ENCODE measurements at regions of chr20 and their contacts with region 1.

Region 1: GRCh38 chr20:49219089-49219923 is at the start of gene DDX27:
- DNase-seq: peak; percentile 94 to 98 (median 97)
- H3K4me3 ChIP-seq: peak within 1 kb of the TSS; percentile 100
- H3K4me3 Mint-ChIP-seq: peak within 1 kb of the TSS; percentile 87 to 99 (median 95)
- H3K27ac ChIP-seq: peak within 1 kb of the TSS; percentile 98
- H3K27ac Mint-ChIP-seq: peak within 1 kb of the TSS; percentile 80 to 100 (median 98)
- H3K4me1 ChIP-seq: peaks cover 23% of the 10 kb centered on the region
- H3K4me1 Mint-ChIP-seq: peaks cover 27 to 40% (median 32%) of the 10 kb centered on the region in 3 donors
- H3K27me3 ChIP-seq: no peaks in the 10 kb centered on the region
- H3K27me3 Mint-ChIP-seq: peaks cover 0 to 3% of the 10 kb centered on the region in 2 donors
- total RNA-seq, gene DDX27: 67.3 to 68.7 TPM

Region 2: GRCh38 chr20:49132995-49133478 is 86.3 kb before region 1 on chr20:
- CTCF ChIA-PET with region 1: interaction called, 98 read pairs
- POLR2A ChIA-PET with region 1: interaction called, 6 read pairs
- DNase-seq: peak in 2 of 5 donors; percentile 40 to 54
- H3K4me3 ChIP-seq: no peak overlapping the region
- H3K4me3 Mint-ChIP-seq: no peak overlapping the region
- H3K27ac ChIP-seq: no peak overlapping the region
- H3K27ac Mint-ChIP-seq: peak overlapping the region in 7 of 8 donors; percentile 4 to 52 (median 31)
- H3K4me1 ChIP-seq: no peaks in the 10 kb centered on the region
- H3K4me1 Mint-ChIP-seq: peaks cover 10 to 26% (median 13%) of the 10 kb centered on the region in 3 donors
- H3K27me3 ChIP-seq: no peaks in the 10 kb centered on the region
- H3K27me3 Mint-ChIP-seq: no peaks in the 10 kb centered on the region

Region 3: DNA sequence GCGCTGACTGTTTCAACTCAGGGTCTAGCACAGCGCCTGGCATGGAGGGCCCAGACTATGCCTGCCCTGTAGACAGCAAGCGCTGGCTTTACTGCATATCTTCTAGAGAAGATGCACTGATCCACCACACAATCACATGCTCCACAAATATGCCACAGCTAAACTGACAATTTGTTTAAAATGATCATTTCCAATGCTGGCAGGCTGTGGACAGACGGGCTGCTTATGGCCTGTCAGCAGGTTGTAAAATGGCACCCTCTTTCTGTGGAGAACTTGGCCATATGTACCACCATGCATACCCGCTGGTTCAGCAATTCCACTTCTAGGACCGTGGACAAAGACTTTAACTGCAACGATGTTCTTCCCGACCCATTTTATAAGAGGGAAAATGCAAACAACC is 72.0 kb before region 1 on chr20:
- CTCF ChIA-PET with region 1: interaction called, 10 read pairs
- POLR2A ChIA-PET with region 1: no interaction called
- DNase-seq: no peak
- H3K4me3 ChIP-seq: no peak overlapping the region
- H3K4me3 Mint-ChIP-seq: no peak overlapping the region
- H3K27ac ChIP-seq: no peak overlapping the region
- H3K27ac Mint-ChIP-seq: peak overlapping the region in 1 of 8 donors; percentile 2
- H3K4me1 ChIP-seq: no peaks in the 10 kb centered on the region
- H3K4me1 Mint-ChIP-seq: peaks cover 12 to 33% (median 31%) of the 10 kb centered on the region in 3 donors
- H3K27me3 ChIP-seq: no peaks in the 10 kb centered on the region
- H3K27me3 Mint-ChIP-seq: peaks cover 0 to 2% of the 10 kb centered on the region in 2 donors

Region 4: DNA sequence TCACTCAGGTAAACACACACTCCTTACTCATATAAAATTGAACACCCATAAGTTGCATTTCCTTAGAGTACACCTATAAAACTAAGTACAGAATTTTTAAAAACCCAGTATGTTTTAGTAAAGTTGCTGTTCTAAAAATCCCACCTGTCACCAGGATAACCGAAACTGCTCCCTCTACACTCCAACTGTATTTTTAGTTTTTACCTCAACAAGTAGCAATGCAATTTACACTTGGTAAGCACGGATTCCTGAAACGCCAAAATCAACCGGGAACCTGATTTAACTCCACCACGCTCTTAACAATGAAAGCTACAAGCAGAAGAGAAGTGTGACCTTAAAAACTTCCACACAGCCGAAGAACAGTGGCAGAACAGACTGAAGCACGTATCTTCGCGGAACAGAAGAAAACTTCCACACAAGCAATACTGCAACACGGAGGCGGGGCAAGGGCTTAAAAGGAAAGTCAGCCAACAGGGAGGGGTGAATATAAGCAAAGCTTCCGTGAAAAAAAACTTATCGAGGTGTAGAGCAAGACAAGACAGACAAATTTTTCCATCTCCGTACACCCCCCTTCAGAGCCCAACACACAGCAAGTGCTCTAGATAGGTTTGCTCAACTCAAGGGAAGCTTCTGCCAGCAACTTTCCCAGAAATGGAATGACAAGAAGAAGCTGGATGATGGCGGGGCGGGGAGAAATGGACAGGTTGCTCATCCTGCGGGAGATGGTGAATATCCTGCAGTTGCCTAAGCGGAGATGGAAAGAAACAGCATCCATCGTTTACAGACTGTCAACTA is 32.6 kb before region 1 on chr20:
- CTCF ChIA-PET with region 1: interaction called, 46 read pairs
- POLR2A ChIA-PET with region 1: interaction called, 7 read pairs
- DNase-seq: peak; percentile 40 to 71 (median 55)
- H3K4me3 ChIP-seq: peak overlapping the region; percentile 87
- H3K4me3 Mint-ChIP-seq: peak overlapping the region; percentile 87 to 98 (median 97)
- H3K27ac ChIP-seq: peak overlapping the region; percentile 69
- H3K27ac Mint-ChIP-seq: peak overlapping the region; percentile 47 to 97 (median 92)
- H3K4me1 ChIP-seq: peaks cover 38% of the 10 kb centered on the region
- H3K4me1 Mint-ChIP-seq: peaks cover 50 to 57% (median 54%) of the 10 kb centered on the region in 3 donors
- H3K27me3 ChIP-seq: no peaks in the 10 kb centered on the region
- H3K27me3 Mint-ChIP-seq: peaks cover 1 to 3% of the 10 kb centered on the region in 2 donors

Region 5: GRCh38 chr20:49245921-49246740 is 26.8 kb after region 1 on chr20:
- CTCF ChIA-PET with region 1: interaction called, 10 read pairs
- POLR2A ChIA-PET with region 1: interaction called, 3 read pairs
- DNase-seq: peak in 2 of 5 donors; percentile 13 to 33
- H3K4me3 ChIP-seq: no peak overlapping the region
- H3K4me3 Mint-ChIP-seq: no peak overlapping the region
- H3K27ac ChIP-seq: no peak overlapping the region
- H3K27ac Mint-ChIP-seq: peak overlapping the region in 6 of 8 donors; percentile 3 to 76 (median 35)
- H3K4me1 ChIP-seq: no peaks in the 10 kb centered on the region
- H3K4me1 Mint-ChIP-seq: peaks cover 0 to 7% (median 5%) of the 10 kb centered on the region in 3 donors
- H3K27me3 ChIP-seq: no peaks in the 10 kb centered on the region
- H3K27me3 Mint-ChIP-seq: no peaks in the 10 kb centered on the region

Region 6: DNA sequence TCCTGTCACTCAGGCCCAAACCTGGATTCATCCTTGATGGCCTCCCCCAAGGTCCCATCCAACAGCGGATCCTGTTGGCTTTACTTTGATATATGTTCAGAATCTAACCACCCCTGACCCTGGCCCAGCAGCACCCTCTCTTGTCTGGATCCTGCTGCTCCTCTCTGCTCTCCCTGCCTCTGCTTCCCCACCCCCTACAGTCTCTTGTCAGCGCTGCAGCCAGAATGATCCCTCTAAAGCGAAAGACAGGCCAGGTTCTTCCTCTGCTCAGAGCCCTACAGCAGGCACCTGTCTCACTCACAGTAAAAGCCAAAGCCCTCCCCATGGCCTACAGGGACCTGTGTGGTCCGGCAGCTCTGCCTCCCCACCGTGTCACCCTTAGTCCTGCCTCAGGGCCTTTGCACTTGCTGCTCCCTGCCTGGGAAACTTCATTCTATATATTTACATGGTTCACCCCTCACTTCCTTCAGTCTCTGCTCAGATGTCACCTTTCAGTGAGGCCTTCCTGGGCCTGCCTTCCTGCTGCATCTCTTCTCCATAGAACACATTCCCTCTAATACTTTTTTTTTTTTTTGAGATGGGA is 300.6 kb after region 1 on chr20:
- CTCF ChIA-PET with region 1: no interaction called
- POLR2A ChIA-PET with region 1: no interaction called
- DNase-seq: no peak
- H3K4me3 ChIP-seq: no peak overlapping the region
- H3K4me3 Mint-ChIP-seq: no peak overlapping the region
- H3K27ac ChIP-seq: no peak overlapping the region
- H3K27ac Mint-ChIP-seq: peak overlapping the region in 3 of 8 donors; percentile 11 to 78 (median 20)
- H3K4me1 ChIP-seq: no peaks in the 10 kb centered on the region
- H3K4me1 Mint-ChIP-seq: peaks cover 0 to 5% (median 0%) of the 10 kb centered on the region in 3 donors
- H3K27me3 ChIP-seq: peaks cover 3% of the 10 kb centered on the region
- H3K27me3 Mint-ChIP-seq: peaks cover 15 to 42% of the 10 kb centered on the region in 2 donors

Measured in CD8-positive, alpha-beta memory T cell (primary cell).